ENCODE measurements at regions of chr17 and their contacts with region 1.

Region 1: DNA sequence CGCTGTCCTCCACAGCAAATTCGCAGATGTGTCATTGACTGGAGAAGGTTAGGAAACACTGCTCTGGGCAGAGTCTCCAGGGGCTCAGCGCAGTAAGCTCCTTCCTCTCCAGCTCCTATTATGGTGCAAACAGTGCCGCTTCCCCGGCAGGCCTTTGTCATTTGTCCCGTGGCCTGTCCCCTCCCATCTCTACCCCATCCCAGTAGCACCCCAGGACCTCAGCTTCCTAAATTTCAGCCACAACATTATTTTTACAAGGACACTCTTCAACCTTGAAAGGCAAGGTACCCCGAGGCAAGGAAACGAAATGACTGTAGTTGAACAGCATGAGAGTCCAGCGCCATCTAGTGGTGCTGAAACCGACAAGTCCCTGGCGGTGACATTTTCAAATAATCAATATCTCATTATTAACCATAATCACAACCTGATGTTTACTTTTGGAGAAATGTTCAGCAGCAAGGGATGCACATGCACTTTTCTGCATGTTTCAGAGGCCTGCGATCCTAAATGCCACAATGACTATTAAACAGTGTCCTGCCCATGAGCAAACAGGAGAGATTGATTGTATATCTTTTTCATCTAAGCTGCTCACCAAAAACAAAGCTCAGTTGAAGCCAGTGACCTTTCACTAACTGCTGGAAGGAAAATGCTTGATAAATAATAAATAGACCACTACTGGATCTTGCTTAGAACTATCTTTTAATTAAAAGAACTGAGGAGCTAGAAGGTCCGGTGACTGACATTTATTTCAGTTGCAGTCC is 16.5 kb downstream of the MRPS23 start:
- DNase-seq: peak; percentile 13 to 74
- H3K4me3 ChIP-seq: peak overlapping the region in 3 of 4 experiments; percentile 31 to 52 (median 42); a peak in 6 of 8 replicates
- H3K27ac ChIP-seq: no peak overlapping the region
- H3K4me1 ChIP-seq: peaks cover 5 to 14% (median 7%) of the 10 kb centered on the region in 4 experiments
- H3K27me3 ChIP-seq: no peaks in the 10 kb centered on the region
- CTCF ChIP-seq: peak; percentile 78 to 96 (median 87)
- EP300 ChIP-seq: no peak
- POLR2A ChIP-seq: no peak
- RAD21 ChIP-seq: peak; percentile 77 to 83

Region 2: DNA sequence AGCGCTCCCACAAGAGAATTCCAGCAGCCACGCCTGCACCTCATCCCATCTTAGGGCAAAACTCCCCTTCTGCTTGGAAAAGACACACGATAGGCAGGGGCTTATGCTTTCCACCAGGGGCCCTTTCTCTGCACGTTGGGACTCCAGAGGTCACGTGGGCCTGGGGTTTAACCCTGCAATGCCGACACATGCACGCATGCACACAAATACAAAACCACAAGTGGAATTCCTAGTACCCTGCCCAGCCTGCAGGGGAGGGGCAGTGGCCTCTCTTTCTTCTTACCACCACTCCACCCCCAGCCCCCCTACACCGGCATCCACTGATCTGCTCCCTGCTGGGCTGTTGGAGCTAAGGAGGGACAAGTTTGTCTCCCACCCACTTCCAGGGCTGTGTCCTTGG is 71.5 kb before region 1 on chr17:
- CTCF ChIA-PET with region 1: interaction called, 19 read pairs
- POLR2A ChIA-PET with region 1: interaction called, 4 read pairs
- DNase-seq: no peak
- H3K4me3 ChIP-seq: peak overlapping the region in 1 of 4 experiments; percentile 10; a peak in 2 of 8 replicates
- H3K27ac ChIP-seq: no peak overlapping the region
- H3K4me1 ChIP-seq: peaks cover 3 to 12% (median 7%) of the 10 kb centered on the region in 4 experiments
- H3K27me3 ChIP-seq: no peaks in the 10 kb centered on the region
- CTCF ChIP-seq: peak in 1 of 3 experiments; percentile 17; a peak in 1 of 4 replicates
- EP300 ChIP-seq: no peak
- POLR2A ChIP-seq: no peak
- RAD21 ChIP-seq: no peak

Region 3: GRCh38 chr17:57788725-57789124 is 44.6 kb before region 1 on chr17:
- CTCF ChIA-PET with region 1: interaction called, 42 read pairs
- POLR2A ChIA-PET with region 1: interaction called, 3 read pairs
- DNase-seq: no peak
- H3K4me3 ChIP-seq: no peak overlapping the region
- H3K27ac ChIP-seq: no peak overlapping the region
- H3K4me1 ChIP-seq: no peaks in the 10 kb centered on the region; a peak in 1 of 7 replicates
- H3K27me3 ChIP-seq: peaks cover 0 to 13% (median 7%) of the 10 kb centered on the region in 4 experiments; a peak in 6 of 7 replicates
- CTCF ChIP-seq: no peak
- EP300 ChIP-seq: no peak
- POLR2A ChIP-seq: no peak
- RAD21 ChIP-seq: no peak

Region 4: GRCh38 chr17:57810721-57811637 is 22.4 kb before region 1 on chr17:
- CTCF ChIA-PET with region 1: interaction called, 49 read pairs
- POLR2A ChIA-PET with region 1: no interaction called
- DNase-seq: no peak
- H3K4me3 ChIP-seq: no peak overlapping the region
- H3K27ac ChIP-seq: no peak overlapping the region
- H3K4me1 ChIP-seq: no peaks in the 10 kb centered on the region; a peak in 1 of 7 replicates
- H3K27me3 ChIP-seq: no peaks in the 10 kb centered on the region; a peak in 2 of 7 replicates
- CTCF ChIP-seq: no peak
- EP300 ChIP-seq: no peak
- POLR2A ChIP-seq: no peak
- RAD21 ChIP-seq: no peak

Region 5: GRCh38 chr17:57982452-57983170 is 149.3 kb after region 1 on chr17:
- CTCF ChIA-PET with region 1: interaction called, 10 read pairs
- POLR2A ChIA-PET with region 1: no interaction called
- DNase-seq: no peak
- H3K4me3 ChIP-seq: no peak overlapping the region
- H3K27ac ChIP-seq: no peak overlapping the region
- H3K4me1 ChIP-seq: peaks cover 0 to 2% (median 0%) of the 10 kb centered on the region in 4 experiments; a peak in 1 of 7 replicates
- H3K27me3 ChIP-seq: no peaks in the 10 kb centered on the region
- CTCF ChIP-seq: no peak
- EP300 ChIP-seq: no peak
- POLR2A ChIP-seq: no peak
- RAD21 ChIP-seq: no peak

Measured in H1 (cell line).